MCF 10A (cell line): ENCODE measurements at regions of chr14 and their contacts with region 1.

Region 1: DNA sequence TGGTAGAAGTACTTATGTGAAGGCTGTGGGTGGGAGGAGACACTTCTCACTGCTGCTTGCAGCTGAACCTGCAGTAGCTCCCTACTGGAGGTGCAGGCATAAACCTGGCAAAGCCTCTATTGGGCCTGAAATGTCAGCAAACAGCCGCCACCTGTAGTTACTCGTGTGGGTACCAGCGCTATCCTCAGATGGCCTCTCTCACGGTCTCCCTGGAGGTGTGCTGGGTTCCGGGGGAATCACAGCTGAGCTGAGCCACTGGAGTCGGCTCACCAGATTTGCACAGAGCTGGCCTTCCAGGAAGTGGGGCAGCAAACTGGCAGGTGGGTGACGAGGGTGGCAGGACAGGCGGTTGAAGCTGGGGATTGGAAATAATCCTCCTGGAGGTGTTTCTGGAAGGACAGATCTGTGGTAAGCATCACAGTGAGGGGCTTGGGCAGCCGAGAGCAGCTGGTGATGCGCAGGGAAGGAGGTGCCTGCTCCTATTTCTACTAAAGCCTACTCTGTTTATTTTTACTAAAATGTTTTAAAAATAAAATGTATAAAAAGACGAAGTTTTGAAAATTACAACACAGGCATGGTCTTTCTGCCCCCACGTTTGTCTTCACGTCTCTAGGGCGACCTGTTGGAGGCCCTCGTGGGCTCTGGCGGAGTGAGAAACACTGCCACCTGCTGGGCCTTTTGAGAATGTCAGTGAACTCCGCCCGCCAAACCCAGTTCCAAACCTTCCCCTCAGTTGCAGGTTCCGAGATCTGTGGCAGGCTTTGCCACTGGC is 67.8 kb upstream of the PLEKHG3 start:
- DNase-seq: peak; percentile 68
- H3K4me3 Mint-ChIP-seq: no peak overlapping the region
- H3K27ac Mint-ChIP-seq: no peak overlapping the region
- H3K4me1 Mint-ChIP-seq: peaks cover 17% of the 10 kb centered on the region
- H3K27me3 Mint-ChIP-seq: no peaks in the 10 kb centered on the region
- CTCF ChIP-seq: peak; percentile 70

Region 2: GRCh38 chr14:64338616-64339316 is 297.6 kb before region 1 on chr14:
- CTCF ChIA-PET with region 1: interaction called, 4 read pairs
- POLR2A ChIA-PET with region 1: interaction called, 3 read pairs
- intact Hi-C with region 1: loop called (anchors 5 kb)
- DNase-seq: peak; percentile 99
- H3K4me3 Mint-ChIP-seq: peak overlapping the region; percentile 94
- H3K27ac Mint-ChIP-seq: peak overlapping the region; percentile 83
- H3K4me1 Mint-ChIP-seq: peaks cover 6% of the 10 kb centered on the region
- H3K27me3 Mint-ChIP-seq: no peaks in the 10 kb centered on the region
- CTCF ChIP-seq: no peak

Region 3: DNA sequence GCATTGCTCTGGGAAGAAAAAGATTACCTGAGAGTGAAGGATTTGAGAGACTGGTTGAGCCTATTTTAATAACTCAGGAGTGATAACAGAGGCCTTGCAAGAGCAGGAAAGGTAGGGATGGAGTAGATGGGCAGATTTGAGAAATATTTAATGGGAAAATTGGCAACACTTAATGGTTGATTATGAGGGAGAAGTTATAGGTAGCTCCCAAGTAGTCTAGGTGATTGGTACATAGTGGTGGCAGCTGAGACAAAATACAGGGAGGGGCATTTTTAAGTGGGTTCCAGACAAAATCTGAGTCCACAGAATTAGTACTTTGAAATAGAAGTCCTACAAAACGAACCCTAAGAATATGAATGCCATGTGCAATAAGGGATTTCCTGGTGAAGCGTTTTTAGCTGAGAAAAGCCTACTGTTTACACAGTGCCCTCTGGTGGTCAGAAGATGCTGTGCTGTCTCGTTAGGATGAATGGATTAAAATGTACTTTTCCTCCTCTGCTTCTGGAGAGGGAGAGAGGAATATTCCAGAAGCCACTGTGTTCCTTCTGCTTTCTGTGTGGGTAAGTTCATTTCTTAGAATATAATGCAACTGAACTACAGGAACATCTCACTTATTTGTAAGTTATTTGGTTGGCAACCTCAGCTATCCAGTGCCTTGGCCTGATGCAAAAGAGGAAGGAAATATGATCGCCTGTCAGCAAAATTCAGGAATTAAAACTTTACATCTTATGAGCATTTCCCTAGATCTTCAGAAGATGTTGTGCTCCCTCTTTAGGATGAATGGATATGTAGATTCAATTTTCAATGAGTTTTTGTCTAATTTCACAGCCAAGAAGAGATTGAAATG is 125.3 kb before region 1 on chr14:
- CTCF ChIA-PET with region 1: interaction called, 14 read pairs
- POLR2A ChIA-PET with region 1: interaction called, 35 read pairs
- intact Hi-C with region 1: loop called (anchors 2 kb)
- DNase-seq: peak; percentile 77
- H3K4me3 Mint-ChIP-seq: no peak overlapping the region
- H3K27ac Mint-ChIP-seq: peak overlapping the region; percentile 32
- H3K4me1 Mint-ChIP-seq: peaks cover 30% of the 10 kb centered on the region
- H3K27me3 Mint-ChIP-seq: no peaks in the 10 kb centered on the region
- CTCF ChIP-seq: peak; percentile 80

Region 4: DNA sequence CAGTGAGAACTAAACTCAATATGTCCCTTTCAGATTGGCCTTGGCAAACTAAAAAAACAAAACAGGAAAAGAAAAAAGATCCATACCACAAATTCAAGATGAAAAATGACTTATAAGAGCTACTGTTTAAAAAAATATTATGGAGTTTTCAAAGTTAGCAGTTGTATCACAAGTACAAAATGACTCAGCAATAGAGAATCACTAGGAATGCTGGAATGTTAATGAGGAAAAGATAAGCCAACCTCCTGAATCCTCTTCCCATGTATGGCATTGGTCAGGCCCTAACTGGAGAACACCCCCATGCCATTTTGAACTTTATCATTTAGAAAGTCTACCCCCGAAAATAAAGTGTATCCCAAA is 24.4 kb before region 1 on chr14:
- CTCF ChIA-PET with region 1: interaction called, 11 read pairs
- POLR2A ChIA-PET with region 1: interaction called, 3 read pairs
- intact Hi-C with region 1: no loop called
- DNase-seq: no peak
- H3K4me3 Mint-ChIP-seq: no peak overlapping the region
- H3K27ac Mint-ChIP-seq: no peak overlapping the region
- H3K4me1 Mint-ChIP-seq: peaks cover 6% of the 10 kb centered on the region
- H3K27me3 Mint-ChIP-seq: no peaks in the 10 kb centered on the region
- CTCF ChIP-seq: no peak

Region 5: DNA sequence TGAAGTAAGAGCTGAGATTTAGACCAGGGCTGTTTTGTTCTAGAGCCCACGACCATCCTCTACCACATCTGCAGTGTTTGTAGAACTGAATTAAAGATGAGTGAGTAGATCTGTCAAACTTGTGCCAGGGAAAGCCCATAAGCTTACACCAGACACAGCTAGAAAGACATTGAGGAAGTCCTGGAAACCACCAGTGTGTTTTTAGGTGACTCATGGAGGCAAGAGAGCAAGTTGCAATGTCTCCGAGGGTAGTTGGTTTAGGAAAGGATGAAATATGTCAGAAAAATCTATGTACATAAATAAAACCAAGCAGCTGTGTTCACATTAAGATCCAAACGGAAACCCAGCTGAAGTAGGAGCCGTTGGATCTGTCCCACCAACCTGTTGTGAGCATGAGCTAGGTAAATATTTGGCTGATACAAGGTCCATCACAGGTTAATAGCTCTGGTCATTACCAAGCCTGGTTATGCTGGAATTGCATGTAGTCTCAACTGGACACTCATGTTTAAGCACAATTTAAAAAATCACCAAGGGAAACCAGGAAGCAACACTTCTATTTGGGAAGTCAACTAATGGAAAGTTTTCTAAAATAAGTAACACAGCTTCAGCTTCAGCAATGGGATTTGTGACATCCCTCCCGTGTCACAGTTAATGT is 18.0 kb after region 1 on chr14:
- CTCF ChIA-PET with region 1: interaction called, 18 read pairs
- POLR2A ChIA-PET with region 1: interaction called, 13 read pairs
- intact Hi-C with region 1: no loop called
- DNase-seq: peak; percentile 87
- H3K4me3 Mint-ChIP-seq: no peak overlapping the region
- H3K27ac Mint-ChIP-seq: peak overlapping the region; percentile 75
- H3K4me1 Mint-ChIP-seq: peaks cover 34% of the 10 kb centered on the region
- H3K27me3 Mint-ChIP-seq: no peaks in the 10 kb centered on the region
- CTCF ChIP-seq: no peak

Region 6: GRCh38 chr14:64745511-64746091 is 109.2 kb after region 1 on chr14:
- CTCF ChIA-PET with region 1: no interaction called
- POLR2A ChIA-PET with region 1: no interaction called
- intact Hi-C with region 1: no loop called
- DNase-seq: no peak
- H3K4me3 Mint-ChIP-seq: no peak overlapping the region
- H3K27ac Mint-ChIP-seq: peak overlapping the region; percentile 35
- H3K4me1 Mint-ChIP-seq: no peaks in the 10 kb centered on the region
- H3K27me3 Mint-ChIP-seq: no peaks in the 10 kb centered on the region
- CTCF ChIP-seq: no peak